Activated naive CD8-positive, alpha-beta T cell treated with anti-CD3 and anti-CD28 coated beads, Interleukin-2, amount 10 ng/mL, durations not matched to agents 7 days and 5 days (primary cell): ENCODE measurements at regions of chr10 and their contacts with region 1.

Region 1: DNA sequence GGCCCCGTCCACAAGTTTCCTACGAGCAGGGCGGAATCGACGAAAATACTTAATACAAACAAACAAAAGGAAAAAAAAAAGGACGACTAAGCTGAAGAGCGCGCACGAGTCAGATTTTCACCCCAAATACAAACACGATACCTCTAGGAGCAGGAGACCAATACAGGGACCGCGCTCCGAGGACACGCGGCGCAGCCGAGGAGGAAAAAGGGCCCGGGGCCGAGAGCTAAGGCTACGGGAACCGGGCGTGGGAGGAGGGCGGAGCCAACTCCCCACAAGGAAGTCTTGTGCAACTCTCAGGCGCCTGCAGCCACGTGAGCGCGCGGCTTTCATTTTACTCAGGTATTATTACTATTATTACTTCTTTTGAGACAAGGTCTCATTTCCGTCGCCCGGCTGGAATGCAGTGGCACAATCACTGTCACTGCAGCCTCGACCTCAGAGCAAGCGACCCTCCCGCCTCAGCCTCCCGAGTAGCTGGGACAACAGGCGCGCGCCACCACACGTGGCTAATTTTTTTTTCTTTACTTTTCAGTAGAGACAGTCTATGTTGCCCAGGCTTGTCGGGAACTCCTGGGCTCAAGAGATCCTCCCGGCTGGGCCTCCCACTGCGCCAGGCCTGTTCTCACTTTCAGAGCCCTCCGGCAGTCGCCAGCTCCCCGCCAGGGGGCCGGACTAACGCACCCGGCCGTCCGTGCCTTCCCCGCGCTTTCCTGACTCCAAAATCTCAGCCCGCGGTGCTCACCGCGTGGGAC is 1.2 kb downstream of the HNRNPF start:
- DNase-seq: peak; percentile 84
- ATAC-seq: peak; percentile 31
- H3K4me3 Mint-ChIP-seq: peak overlapping the region; percentile 98
- H3K27ac Mint-ChIP-seq: peak overlapping the region; percentile 99
- H3K4me1 Mint-ChIP-seq: peaks cover 28% of the 10 kb centered on the region
- H3K27me3 Mint-ChIP-seq: no peaks in the 10 kb centered on the region

Region 2: DNA sequence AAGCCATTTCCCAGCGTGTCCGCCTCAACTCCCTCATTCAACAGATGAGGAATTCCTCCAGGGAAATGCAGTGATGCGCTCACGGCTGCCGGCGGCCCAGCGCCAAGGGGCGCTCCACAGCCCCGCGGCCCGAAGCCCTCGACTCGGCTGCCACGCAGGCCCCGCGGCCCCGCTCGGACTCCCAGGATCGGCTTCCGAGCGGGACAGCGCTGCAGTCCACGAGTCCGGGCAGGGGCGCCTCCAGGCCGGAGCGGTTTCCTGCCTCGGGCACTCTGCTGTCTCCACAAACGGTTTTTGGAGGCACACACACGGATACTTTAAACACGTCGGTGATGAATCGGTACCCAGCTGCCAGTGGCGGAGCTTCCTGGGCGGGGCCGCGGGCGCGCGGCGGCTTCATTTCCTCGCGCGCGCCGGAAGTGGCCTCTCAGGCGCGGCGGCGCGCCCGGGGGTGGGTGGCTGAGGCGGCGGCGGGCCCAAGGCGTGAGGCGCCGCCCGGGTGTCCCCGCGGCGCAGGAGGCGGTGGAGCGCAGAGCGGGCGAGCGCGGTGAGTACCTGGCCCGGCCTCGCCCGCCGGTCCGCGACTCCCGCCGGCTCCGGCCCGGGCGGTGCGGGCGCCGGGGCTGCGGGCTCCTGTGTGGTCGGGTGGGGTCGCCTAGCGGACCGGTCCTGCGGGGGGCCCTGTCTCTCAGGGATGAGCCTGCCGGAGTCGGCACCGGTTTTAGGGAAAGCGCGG is 269.6 kb before region 1 on chr10 and contains the start of gene CSGALNACT2:
- POLR2A ChIA-PET with region 1: interaction called, 12 read pairs
- DNase-seq: peak; percentile 96
- ATAC-seq: peak; percentile 81
- H3K4me3 Mint-ChIP-seq: peak within 1 kb of the TSS; percentile 96
- H3K27ac Mint-ChIP-seq: peak within 1 kb of the TSS; percentile 99
- H3K4me1 Mint-ChIP-seq: peaks cover 47% of the 10 kb centered on the region
- H3K27me3 Mint-ChIP-seq: no peaks in the 10 kb centered on the region
- total RNA-seq, gene CSGALNACT2: 37.2 to 39.5 TPM

Region 3: GRCh38 chr10:43396928-43397624 is 10.7 kb before region 1 on chr10:
- POLR2A ChIA-PET with region 1: interaction called, 108 read pairs
- DNase-seq: peak; percentile 88
- ATAC-seq: peak; percentile 80
- H3K4me3 Mint-ChIP-seq: peak overlapping the region; percentile 91
- H3K27ac Mint-ChIP-seq: peak overlapping the region; percentile 95
- H3K4me1 Mint-ChIP-seq: peaks cover 69% of the 10 kb centered on the region
- H3K27me3 Mint-ChIP-seq: no peaks in the 10 kb centered on the region

Region 4: DNA sequence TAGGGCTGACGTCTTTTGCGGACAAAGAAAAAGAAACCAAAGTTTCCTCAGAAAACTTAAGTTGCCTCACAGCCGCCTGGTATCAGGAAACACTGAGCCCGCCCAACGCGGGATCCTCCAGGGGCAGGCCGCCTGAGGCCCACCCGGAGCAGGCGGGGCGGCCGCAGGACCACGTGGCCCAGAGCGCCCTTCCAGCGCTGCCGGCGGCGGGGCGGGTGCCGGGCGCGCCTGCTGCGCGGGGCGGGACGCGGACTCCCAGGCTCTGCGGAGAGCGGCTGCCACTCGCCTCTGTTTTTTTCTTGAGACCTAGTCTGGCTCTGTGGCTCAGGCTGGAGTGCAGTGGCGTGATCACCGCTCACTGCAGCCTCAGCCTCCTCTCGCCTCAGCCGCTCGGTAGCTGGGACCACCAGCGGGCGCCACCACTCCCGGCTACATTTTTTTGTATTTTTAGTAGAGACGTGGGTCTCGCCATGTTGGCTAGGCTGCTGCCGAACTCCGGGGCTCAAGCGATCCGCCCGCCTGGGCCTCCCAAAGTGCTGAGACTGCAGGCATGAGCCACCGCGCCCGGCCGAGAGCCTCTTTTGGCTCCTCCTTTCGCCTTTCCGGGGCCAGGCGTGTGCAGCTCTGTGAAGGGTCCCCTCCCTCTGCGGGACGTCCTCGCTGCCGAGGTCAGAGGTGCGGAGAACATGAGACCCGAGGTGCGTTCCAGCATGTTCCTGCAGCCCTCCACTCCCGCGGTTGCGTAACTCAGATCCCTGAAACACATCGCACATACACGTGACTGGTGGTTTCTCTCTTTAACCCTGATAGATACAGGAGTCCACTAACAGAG is 12.8 kb after region 1 on chr10:
- POLR2A ChIA-PET with region 1: interaction called, 137 read pairs
- DNase-seq: peak; percentile 89
- ATAC-seq: peak; percentile 89
- H3K4me3 Mint-ChIP-seq: peak overlapping the region; percentile 89
- H3K27ac Mint-ChIP-seq: peak overlapping the region; percentile 96
- H3K4me1 Mint-ChIP-seq: peaks cover 35% of the 10 kb centered on the region
- H3K27me3 Mint-ChIP-seq: no peaks in the 10 kb centered on the region

Region 5: GRCh38 chr10:43427166-43427825 is 19.5 kb after region 1 on chr10:
- POLR2A ChIA-PET with region 1: interaction called, 11 read pairs
- DNase-seq: no peak
- ATAC-seq: peak; percentile 70
- H3K4me3 Mint-ChIP-seq: peak overlapping the region; percentile 52
- H3K27ac Mint-ChIP-seq: no peak overlapping the region
- H3K4me1 Mint-ChIP-seq: peaks cover 14% of the 10 kb centered on the region
- H3K27me3 Mint-ChIP-seq: no peaks in the 10 kb centered on the region

Region 6: DNA sequence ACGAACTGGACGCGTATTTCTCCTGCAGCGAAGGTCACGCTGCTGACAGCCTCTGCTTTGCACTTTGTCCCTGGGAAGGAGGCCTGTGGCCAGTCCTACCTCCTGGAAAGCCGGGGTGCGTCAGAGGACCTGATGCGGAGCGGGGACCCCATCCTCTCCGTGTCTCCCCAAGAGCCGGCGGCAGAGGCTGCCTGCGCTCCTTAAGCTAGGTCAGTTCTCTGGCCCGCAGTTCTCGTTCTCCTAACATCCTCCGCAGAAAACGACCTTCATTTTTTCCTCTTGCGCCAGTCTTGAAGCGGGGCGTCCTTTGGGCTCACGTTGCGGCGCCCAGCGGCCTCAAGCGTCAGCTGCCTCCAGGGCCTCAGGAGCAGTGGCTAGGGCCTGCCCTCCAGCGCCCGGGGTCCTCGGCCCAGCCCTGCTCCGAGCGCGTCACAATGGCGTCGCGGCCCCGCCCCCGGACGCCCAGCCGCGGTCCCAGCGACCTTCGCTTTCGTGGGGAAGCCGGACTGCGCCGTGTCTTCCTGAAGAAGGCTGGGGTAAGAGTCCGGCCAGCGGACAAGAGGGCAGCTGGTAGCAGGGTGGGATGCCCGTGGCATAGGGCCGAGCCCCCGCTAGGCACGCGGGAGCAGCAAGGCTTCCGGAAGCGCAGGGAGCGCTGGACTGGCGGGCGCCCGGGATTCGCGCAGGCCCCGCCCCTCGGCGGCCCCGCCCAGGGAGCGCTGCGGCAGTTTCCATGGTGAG is 28.8 kb after region 1 on chr10 and contains the start of gene ZNF487:
- POLR2A ChIA-PET with region 1: interaction called, 65 read pairs
- DNase-seq: peak; percentile 97
- ATAC-seq: peak; percentile 97
- H3K4me3 Mint-ChIP-seq: peak within 1 kb of the TSS; percentile 97
- H3K27ac Mint-ChIP-seq: peak within 1 kb of the TSS; percentile 99
- H3K4me1 Mint-ChIP-seq: peaks cover 13% of the 10 kb centered on the region
- H3K27me3 Mint-ChIP-seq: no peaks in the 10 kb centered on the region
- total RNA-seq, gene ZNF487: 3.3 to 3.4 TPM